CD8-positive, alpha-beta T cell (primary cell): ENCODE measurements at regions of chr12 and their contacts with region 1.

Region 1: DNA sequence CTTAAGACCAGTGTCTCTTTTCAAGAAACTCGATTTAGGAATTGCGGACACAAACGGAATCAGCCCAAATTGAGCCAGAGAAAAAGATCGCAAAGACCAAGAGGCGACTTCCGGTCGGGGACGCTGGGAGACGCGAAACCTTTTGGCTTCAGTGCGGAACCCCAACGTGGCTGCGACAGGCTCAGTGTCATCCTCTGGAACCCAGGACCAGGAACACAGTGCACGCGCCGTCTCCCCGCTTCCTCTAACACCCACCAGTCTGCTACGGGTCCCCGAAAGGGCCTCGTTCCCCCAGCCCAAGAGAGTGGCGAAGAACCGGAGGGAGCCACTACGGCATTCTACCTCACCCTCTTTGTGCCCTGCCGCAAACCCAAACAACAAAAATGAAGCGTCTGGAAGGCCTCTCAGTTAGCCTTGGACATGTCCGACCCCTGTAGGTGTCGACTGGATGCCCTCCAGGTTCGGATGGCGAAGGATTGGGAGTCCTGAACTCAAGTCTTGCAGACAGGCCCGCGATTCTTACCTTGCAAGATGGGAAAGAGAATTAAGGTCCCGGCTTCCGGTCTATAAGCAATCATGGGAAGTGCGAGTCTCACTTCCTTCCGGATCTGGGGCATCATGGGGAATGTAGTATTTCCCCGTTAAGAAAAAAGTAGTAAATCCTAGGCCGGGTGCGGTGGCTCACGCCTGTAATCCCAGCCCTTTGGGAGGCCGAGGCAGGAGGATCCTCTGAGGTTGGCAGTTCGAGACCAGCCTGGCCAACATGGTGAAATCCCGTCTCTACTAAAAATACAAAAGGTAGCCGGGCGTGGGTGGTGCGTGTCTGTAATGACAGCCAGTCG is at the start of gene RPL6:
- DNase-seq: peak; percentile 56 to 93 (median 75)
- ATAC-seq: peak; percentile 81
- H3K4me3 ChIP-seq: peak within 1 kb of the TSS; percentile 83 to 89
- H3K4me3 Mint-ChIP-seq: peak within 1 kb of the TSS; percentile 100
- H3K27ac ChIP-seq: peak within 1 kb of the TSS; percentile 87 to 92
- H3K27ac Mint-ChIP-seq: peak within 1 kb of the TSS; percentile 100
- H3K4me1 ChIP-seq: peaks cover 28% of the 10 kb centered on the region
- H3K4me1 Mint-ChIP-seq: peaks cover 38% of the 10 kb centered on the region
- H3K27me3 ChIP-seq: no peaks in the 10 kb centered on the region
- H3K27me3 Mint-ChIP-seq: no peaks in the 10 kb centered on the region
- CTCF ChIP-seq: no peak
- total RNA-seq, gene RPL6: 1,700 to 1,770 TPM

Region 2: GRCh38 chr12:112125250-112125999 is 283.9 kb before region 1 on chr12 and contains the start of gene TRAFD1:
- CTCF ChIA-PET with region 1: no interaction called
- POLR2A ChIA-PET with region 1: no interaction called
- intact Hi-C with region 1: loop called (anchors 1 to 5 kb)
- DNase-seq: peak; percentile 96 to 99 (median 98)
- ATAC-seq: peak; percentile 97
- H3K4me3 ChIP-seq: peak within 1 kb of the TSS; percentile 93 to 98
- H3K4me3 Mint-ChIP-seq: peak within 1 kb of the TSS; percentile 85
- H3K27ac ChIP-seq: peak within 1 kb of the TSS; percentile 82 to 89
- H3K27ac Mint-ChIP-seq: peak within 1 kb of the TSS; percentile 87
- H3K4me1 ChIP-seq: peaks cover 38% of the 10 kb centered on the region
- H3K4me1 Mint-ChIP-seq: peaks cover 40% of the 10 kb centered on the region
- H3K27me3 ChIP-seq: no peaks in the 10 kb centered on the region
- H3K27me3 Mint-ChIP-seq: no peaks in the 10 kb centered on the region
- CTCF ChIP-seq: no peak
- total RNA-seq, gene TRAFD1: 21.1 to 25.4 TPM